ENCODE measurements at regions of chr18 and their contacts with region 1.

Region 1: GRCh38 chr18:9506046-9506792 is 30.9 kb downstream of the RALBP1 start:
- DNase-seq: peak in 2 of 5 donors; percentile 17 to 36
- ATAC-seq: peak; percentile 65 to 79 (median 78)
- H3K4me3 ChIP-seq: no peak overlapping the region
- H3K27ac ChIP-seq: no peak overlapping the region
- H3K4me1 ChIP-seq: peaks cover 0 to 21% (median 7%) of the 10 kb centered on the region in 12 donors
- H3K27me3 ChIP-seq: no peaks in the 10 kb centered on the region
- CTCF ChIP-seq: no peak
- POLR2A ChIP-seq: no peak

Region 2: DNA sequence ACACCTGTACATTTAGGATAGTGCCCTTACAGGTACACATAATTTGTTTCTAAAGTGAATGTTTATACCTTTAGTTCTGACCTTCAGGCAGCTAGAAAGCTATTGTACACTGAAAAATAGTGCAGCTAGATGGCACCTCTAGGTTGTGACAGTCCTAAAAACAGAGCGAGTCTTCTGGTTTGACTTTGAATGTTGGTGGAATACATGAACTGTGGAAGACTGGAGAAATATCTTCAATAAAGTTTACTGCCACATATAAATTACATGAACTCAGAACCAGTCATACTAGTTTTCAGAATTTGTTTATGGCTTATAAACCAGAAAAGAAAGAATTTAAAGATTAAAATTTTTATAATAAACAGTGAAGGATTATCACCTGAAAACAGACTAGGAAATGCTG is 230.3 kb before region 1 on chr18:
- intact Hi-C with region 1: loop called in 1 of 10 experiments (anchors 10 kb)
- DNase-seq: no peak
- ATAC-seq: no peak
- H3K4me3 ChIP-seq: no peak overlapping the region
- H3K27ac ChIP-seq: no peak overlapping the region
- H3K4me1 ChIP-seq: no peaks in the 10 kb centered on the region
- H3K27me3 ChIP-seq: no peaks in the 10 kb centered on the region
- CTCF ChIP-seq: no peak
- POLR2A ChIP-seq: no peak

Region 3: GRCh38 chr18:9433671-9434121 is 72.5 kb before region 1 on chr18:
- intact Hi-C with region 1: no loop called
- DNase-seq: no peak
- ATAC-seq: peak in 1 of 4 donors; percentile 20
- H3K4me3 ChIP-seq: peak overlapping the region in 1 of 12 donors; percentile 9
- H3K27ac ChIP-seq: no peak overlapping the region
- H3K4me1 ChIP-seq: peaks cover 0 to 15% (median 0%) of the 10 kb centered on the region in 12 donors
- H3K27me3 ChIP-seq: no peaks in the 10 kb centered on the region
- CTCF ChIP-seq: no peak
- POLR2A ChIP-seq: no peak